ENCODE measurements at regions of chr13 and their contacts with region 1.

Region 1: DNA sequence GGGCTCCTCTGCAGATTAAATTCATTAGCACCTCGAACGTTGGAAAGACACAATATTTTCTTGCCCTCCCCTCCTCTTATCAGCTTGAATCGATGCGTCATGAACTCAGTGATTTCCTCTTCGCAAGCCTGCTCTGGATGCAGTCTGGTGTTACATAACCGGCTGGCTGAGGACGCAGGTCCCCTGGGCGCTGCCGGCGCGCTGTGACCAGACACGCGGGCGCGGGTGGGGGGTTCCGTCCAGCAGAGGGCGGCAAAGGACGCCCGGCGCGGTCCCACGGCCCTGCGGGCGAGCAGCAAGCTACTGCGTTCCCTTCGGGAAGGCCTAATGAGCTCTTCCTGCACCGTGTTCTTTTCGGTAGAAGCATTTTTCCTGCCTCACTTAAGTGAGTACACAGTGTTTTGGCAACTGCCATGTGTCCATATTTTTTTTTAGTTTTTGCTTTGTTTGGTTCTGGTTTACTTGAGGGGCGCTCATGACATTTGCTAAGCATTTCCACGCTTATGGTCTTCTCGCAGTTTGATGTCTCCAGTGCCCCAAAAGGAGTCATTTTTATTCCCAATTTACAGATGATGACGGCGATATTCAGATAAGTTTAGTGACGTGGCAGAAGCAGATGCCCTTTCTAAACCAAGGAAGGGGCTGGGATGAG is 112.2 kb upstream of the MBNL2 start:
- DNase-seq: peak; percentile 48
- H3K4me3 ChIP-seq: no peak overlapping the region
- CTCF ChIP-seq: peak; percentile 85

Region 2: DNA sequence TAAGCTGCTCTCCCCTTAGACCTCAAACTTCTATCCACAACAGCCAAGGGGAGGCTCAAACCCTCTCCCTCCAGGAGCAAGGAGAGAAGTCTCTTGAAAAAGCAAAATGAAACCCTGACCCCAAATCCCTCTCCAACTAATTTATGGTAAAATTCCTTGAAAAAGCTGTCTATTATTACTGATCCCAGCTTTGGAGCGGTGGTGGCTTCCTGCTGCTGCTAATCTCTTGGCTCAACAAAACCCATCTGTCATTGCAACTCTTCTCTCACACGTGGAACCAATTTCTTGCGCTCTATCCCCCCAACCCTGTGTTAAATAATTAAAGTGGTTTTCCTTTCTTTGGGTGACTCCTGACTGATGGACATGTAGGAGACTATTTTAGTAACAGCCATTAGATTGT is 51.6 kb before region 1 on chr13:
- in situ Hi-C with region 1: no loop called
- DNase-seq: peak; percentile 29
- H3K4me3 ChIP-seq: no peak overlapping the region
- CTCF ChIP-seq: no peak

Region 3: DNA sequence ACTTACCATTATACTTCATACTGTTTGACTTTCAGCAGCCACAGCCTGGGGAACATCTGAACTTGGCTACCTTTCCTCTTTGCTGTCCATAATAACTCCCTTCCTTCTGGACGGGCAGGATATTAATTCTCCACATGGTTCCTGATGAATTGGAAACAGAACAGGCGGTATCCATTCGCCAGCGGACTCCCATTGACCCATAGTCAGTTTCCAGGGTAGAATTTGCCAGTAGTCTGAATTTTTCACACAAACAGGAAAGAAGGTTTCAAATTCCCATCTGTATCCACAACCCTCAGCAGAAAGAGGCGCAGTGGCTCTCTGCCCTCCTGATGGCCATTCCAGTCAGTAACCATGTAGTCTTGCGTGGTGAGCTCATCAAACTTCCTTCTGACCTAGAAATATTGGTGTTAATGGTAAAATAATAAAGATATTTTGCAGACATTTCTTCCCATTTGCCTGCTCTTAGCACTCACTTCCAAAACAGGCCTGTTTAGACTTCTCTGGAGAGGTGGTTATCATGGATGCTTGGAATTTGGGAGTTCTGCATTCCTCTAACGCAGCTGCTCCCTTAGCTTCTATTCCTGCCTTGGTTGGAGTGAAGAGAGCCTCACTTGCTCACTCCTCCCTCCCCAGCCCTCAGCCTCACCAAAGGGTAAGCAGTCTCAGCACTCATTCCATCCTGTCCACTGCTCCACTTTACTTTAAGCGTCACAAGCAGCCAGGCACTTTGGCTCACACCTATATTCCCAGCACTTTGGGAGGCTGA is 40.7 kb before region 1 on chr13:
- in situ Hi-C with region 1: no loop called
- DNase-seq: no peak
- H3K4me3 ChIP-seq: no peak overlapping the region
- CTCF ChIP-seq: no peak

Region 4: GRCh38 chr13:97148894-97149293 is 38.9 kb after region 1 on chr13:
- in situ Hi-C with region 1: no loop called
- DNase-seq: no peak
- H3K4me3 ChIP-seq: no peak overlapping the region
- CTCF ChIP-seq: no peak

Region 5: GRCh38 chr13:97212601-97213040 is 102.7 kb after region 1 on chr13:
- in situ Hi-C with region 1: loop called (anchors 10 kb)
- DNase-seq: no peak
- H3K4me3 ChIP-seq: no peak overlapping the region
- CTCF ChIP-seq: peak; percentile 82

Region 6: DNA sequence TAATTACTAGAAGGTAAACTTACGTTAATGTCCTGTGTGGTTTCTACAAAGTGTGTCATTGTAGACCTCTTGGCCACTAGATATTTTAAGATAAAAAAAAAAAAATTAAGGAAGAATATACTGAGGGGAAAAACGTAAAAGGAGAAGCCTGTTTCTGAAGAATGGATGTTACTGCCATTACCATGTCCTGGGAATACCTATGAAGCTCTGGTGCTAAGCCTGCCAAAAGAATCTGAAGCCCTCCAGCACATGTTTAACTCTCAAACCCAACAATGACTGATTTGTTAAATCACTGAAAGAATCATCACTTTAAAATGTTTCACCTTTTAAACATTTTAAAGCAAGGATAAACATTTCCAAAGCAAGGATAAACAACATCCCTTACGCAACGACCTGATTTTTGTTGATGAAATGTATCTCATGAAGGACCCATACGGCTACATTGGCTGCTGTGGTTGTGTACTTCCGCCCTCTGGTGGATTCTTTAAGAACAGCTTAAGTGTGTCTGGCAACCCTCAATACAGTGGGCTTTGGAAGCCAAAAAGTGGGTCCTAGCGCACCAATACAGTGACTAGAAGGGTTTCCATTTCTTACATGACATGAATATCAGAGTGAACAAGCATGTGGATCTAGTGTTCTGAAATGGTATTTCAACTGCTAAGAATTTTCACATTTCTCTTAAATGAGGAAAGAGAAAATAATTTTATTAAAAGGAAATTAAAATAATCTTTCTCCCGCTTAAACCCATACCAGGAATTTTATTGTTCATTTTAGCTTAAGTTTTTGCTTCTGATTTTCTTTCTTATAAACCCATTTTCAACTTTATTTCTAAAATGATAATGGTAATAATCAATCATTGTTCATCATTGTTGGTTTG is 249.5 kb after region 1 on chr13:
- in situ Hi-C with region 1: loop called (anchors 25 kb)
- DNase-seq: peak; percentile 69
- H3K4me3 ChIP-seq: no peak overlapping the region
- CTCF ChIP-seq: peak; percentile 84